BJ (cell line): ENCODE measurements at regions of chr1 and their contacts with region 1.

Region 1: GRCh38 chr1:86507935-86508582 is 38.8 kb upstream of the CLCA4 start:
- DNase-seq: no peak
- H3K4me3 ChIP-seq: no peak overlapping the region
- H3K27me3 ChIP-seq: no peaks in the 10 kb centered on the region
- CTCF ChIP-seq: peak; percentile 61

Region 2: GRCh38 chr1:86380257-86380861 is 127.7 kb before region 1 on chr1:
- CTCF ChIA-PET with region 1: interaction called, 47 read pairs
- POLR2A ChIA-PET with region 1: no interaction called
- DNase-seq: no peak
- H3K4me3 ChIP-seq: no peak overlapping the region
- H3K27me3 ChIP-seq: no peaks in the 10 kb centered on the region
- CTCF ChIP-seq: peak; percentile 64

Region 3: DNA sequence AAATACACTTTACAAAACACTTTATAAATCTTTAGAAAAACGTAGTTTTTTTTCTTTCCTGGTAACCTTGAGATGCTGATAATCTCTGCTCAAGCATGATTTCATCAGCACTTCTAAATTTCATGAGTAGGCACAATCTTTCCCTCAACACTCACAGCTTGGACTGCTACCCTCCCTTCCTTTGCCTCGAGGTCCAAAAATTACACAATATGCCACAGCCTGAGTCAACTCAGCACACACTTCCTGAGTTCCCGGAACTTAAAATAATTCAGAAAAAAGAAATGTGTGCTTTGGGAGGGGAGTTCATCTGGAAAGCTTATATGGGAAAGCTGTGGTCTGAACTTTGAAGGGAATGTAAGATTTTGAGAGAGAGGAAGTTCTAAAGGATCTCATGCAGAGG is 78.2 kb before region 1 on chr1:
- CTCF ChIA-PET with region 1: interaction called, 10 read pairs
- POLR2A ChIA-PET with region 1: no interaction called
- DNase-seq: peak; percentile 88
- H3K4me3 ChIP-seq: no peak overlapping the region
- H3K27me3 ChIP-seq: no peaks in the 10 kb centered on the region
- CTCF ChIP-seq: no peak

Region 4: DNA sequence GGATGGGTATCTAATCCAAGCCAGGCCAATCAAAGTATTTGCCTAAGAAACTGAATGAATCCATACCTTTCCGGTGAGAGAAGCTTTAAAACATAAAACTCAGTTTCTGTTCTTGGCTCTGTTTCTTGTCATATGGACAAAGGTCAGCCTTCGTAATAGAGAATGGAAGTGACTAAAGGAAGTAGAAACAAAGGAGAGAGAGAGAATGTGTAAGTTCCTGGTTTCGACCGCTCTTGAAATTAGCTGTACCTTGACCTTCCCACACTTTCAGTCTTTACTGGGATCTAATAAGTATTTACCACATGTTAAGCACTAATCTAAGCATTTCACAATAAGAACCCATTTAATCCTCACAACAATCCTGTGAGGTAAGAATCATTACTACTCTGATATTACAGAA is 19.2 kb after region 1 on chr1:
- CTCF ChIA-PET with region 1: no interaction called
- POLR2A ChIA-PET with region 1: no interaction called
- DNase-seq: no peak
- H3K4me3 ChIP-seq: no peak overlapping the region
- H3K27me3 ChIP-seq: no peaks in the 10 kb centered on the region; the same call in 1 of the 2 replicates
- CTCF ChIP-seq: no peak

Region 5: GRCh38 chr1:86640161-86640670 is 132.2 kb after region 1 on chr1:
- CTCF ChIA-PET with region 1: no interaction called
- POLR2A ChIA-PET with region 1: no interaction called
- DNase-seq: no peak
- H3K4me3 ChIP-seq: no peak overlapping the region
- H3K27me3 ChIP-seq: no peaks in the 10 kb centered on the region; the same call in 1 of the 2 replicates
- CTCF ChIP-seq: no peak